ENCODE measurements at regions of chr1 and their contacts with region 1.

Region 1: DNA sequence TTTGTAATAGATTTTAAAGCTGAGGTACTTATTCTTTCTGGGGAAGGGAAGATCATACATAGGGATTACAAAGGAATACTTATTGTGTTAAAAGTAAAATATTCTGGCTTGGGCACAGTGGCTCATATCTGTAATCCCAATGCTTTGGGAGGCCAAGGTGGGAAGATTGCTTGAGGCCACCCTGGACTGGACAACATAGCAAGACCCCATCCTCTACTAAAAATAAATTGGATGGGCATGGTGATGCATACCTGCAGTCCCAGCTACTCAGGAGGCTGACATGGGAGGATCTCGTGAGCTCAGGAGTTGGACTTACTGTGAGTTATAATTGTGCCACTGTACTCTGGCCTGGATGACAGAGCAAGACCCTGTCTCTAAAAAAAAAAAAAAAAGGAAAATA is 27.6 kb downstream of the GABPB2 start:
- DNase-seq: no peak
- H3K4me3 ChIP-seq: no peak overlapping the region
- H3K27ac ChIP-seq: no peak overlapping the region
- H3K4me1 ChIP-seq: peaks cover 3% of the 10 kb centered on the region; the same call in 1 of the 2 replicates
- H3K27me3 ChIP-seq: no peaks in the 10 kb centered on the region
- CTCF ChIP-seq: no peak

Region 2: DNA sequence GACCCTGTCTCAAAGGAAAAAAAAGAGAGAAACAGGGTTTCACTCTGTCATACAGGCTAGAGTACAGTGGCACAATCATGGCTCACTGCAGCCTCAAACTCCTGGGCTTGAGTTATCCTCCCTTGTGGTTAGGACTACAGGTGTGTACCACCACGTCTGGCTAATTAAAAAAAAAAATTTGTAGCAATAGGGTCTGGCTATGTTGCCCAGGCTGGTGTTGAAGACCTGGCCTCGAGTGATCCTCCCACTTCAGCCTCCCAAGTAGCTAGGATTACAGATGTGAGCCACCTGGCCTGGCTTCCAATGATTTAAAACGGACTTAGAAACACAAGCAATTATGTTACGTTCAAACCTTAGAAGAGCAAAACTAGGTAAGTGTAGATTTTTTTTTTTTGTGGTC is 423.2 kb before region 1 on chr1:
- CTCF ChIA-PET with region 1: interaction called, 14 read pairs
- POLR2A ChIA-PET with region 1: no interaction called
- intact Hi-C with region 1: no loop called
- DNase-seq: no peak
- H3K4me3 ChIP-seq: no peak overlapping the region
- H3K27ac ChIP-seq: no peak overlapping the region
- H3K4me1 ChIP-seq: no peaks in the 10 kb centered on the region
- H3K27me3 ChIP-seq: no peaks in the 10 kb centered on the region
- CTCF ChIP-seq: no peak

Region 3: GRCh38 chr1:151130987-151131586 is 33.0 kb after region 1 on chr1:
- CTCF ChIA-PET with region 1: interaction called, 10 read pairs
- POLR2A ChIA-PET with region 1: interaction called, 3 read pairs
- intact Hi-C with region 1: no loop called
- DNase-seq: peak; percentile 64 to 84
- H3K4me3 ChIP-seq: peak overlapping the region; percentile 42; the same call in 1 of the 2 replicates
- H3K27ac ChIP-seq: no peak overlapping the region
- H3K4me1 ChIP-seq: no peaks in the 10 kb centered on the region
- H3K27me3 ChIP-seq: peaks cover 18% of the 10 kb centered on the region; the same call in 1 of the 2 replicates
- CTCF ChIP-seq: no peak

Region 4: DNA sequence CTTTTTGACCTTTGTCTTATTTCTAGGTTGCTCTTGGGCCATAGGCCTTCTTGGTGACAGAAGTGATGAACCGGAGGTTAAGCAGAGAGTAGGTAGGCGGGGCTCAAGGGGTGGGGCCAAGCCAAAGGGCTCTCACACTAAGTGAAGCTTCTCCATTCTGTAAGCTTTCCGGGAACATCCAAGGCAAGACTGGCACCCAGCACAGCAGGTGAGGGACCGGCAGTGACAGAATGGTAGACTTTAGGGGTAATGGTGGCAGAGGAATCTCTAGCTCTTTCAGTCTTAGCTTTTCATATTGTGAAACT is 58.3 kb after region 1 on chr1 and contains the start of gene TNFAIP8L2:
- CTCF ChIA-PET with region 1: interaction called, 19 read pairs
- POLR2A ChIA-PET with region 1: no interaction called
- intact Hi-C with region 1: loop called (anchors 1 kb)
- DNase-seq: no peak
- H3K4me3 ChIP-seq: no peak within 1 kb of the TSS
- H3K27ac ChIP-seq: no peak within 1 kb of the TSS
- H3K4me1 ChIP-seq: no peaks in the 10 kb centered on the region
- H3K27me3 ChIP-seq: no peaks in the 10 kb centered on the region
- CTCF ChIP-seq: no peak
- total RNA-seq, gene TNFAIP8L2: not detected in 2 replicates

Region 5: GRCh38 chr1:151311589-151312331 is 213.6 kb after region 1 on chr1:
- CTCF ChIA-PET with region 1: interaction called, 10 read pairs
- POLR2A ChIA-PET with region 1: no interaction called
- intact Hi-C with region 1: no loop called
- DNase-seq: peak; percentile 78 to 98
- H3K4me3 ChIP-seq: no peak overlapping the region
- H3K27ac ChIP-seq: peak overlapping the region; percentile 88
- H3K4me1 ChIP-seq: peaks cover 21% of the 10 kb centered on the region
- H3K27me3 ChIP-seq: no peaks in the 10 kb centered on the region
- CTCF ChIP-seq: no peak